ENCODE measurements at regions of chr4 and their contacts with region 1.

Region 1: GRCh38 chr4:6663596-6664393 is 23.3 kb downstream of the MRFAP1 start:
- DNase-seq: peak; percentile 34
- ATAC-seq: peak; percentile 49
- H3K4me3 Mint-ChIP-seq: peak overlapping the region; percentile 45
- H3K27ac Mint-ChIP-seq: no peak overlapping the region
- H3K4me1 Mint-ChIP-seq: no peaks in the 10 kb centered on the region
- H3K27me3 Mint-ChIP-seq: peaks cover 57% of the 10 kb centered on the region
- CTCF ChIP-seq: no peak

Region 2: GRCh38 chr4:6673660-6674499 is 10.1 kb after region 1 on chr4:
- CTCF ChIA-PET with region 1: interaction called, 56 read pairs
- POLR2A ChIA-PET with region 1: interaction called, 5 read pairs
- DNase-seq: peak; percentile 95
- ATAC-seq: peak; percentile 84
- H3K4me3 Mint-ChIP-seq: peak overlapping the region; percentile 90
- H3K27ac Mint-ChIP-seq: peak overlapping the region; percentile 96
- H3K4me1 Mint-ChIP-seq: peaks cover 31% of the 10 kb centered on the region
- H3K27me3 Mint-ChIP-seq: peaks cover 28% of the 10 kb centered on the region
- CTCF ChIP-seq: no peak

Region 3: DNA sequence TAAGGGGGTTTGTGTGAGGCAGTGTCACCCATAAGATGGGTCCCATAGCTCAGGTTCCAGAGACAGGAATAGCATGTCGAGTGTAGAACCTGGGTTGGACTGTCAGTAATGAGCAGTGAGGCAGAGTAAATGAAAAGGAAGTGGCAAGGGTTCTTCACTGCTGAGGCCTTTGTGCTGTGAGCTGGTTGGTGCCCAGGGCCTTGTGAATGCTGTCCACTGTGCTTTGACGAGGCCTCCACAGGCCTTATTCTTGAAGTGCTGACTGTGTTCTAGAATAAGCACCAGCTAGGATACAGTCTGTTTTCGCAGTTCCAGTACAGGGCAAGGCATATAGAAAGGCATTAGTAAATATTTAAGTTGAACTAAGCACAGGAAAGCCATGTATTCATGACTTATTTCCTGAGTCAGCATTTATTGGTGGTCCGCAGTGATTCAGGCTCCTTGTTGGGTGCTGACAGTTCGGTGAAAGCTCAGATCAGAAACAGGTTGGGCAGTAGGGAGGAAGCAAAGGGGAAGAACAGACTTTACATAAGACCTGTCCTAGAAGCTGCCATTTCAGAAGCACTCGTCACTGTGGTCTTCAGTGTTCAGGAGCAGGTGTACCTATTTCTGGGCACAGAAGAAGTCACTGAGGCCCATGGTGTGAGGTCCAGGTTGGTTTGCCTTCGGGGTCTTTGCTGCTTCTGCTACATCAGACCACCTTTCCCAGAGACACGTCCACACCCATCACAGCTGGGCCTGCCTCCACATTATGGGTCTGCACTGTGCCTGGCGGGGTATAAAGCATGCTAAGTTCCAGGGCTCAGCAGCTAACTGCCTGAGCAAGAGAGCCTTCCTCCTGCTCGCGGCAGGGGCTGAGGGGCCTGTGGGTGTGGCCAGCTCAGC is 353.9 kb after region 1 on chr4:
- CTCF ChIA-PET with region 1: no interaction called
- POLR2A ChIA-PET with region 1: no interaction called
- DNase-seq: no peak
- ATAC-seq: no peak
- H3K4me3 Mint-ChIP-seq: no peak overlapping the region
- H3K27ac Mint-ChIP-seq: peak overlapping the region; percentile 86; the same call in 1 of the 2 replicates
- H3K4me1 Mint-ChIP-seq: peaks cover 14% of the 10 kb centered on the region
- H3K27me3 Mint-ChIP-seq: no peaks in the 10 kb centered on the region
- CTCF ChIP-seq: no peak